A673 (cell line): ENCODE measurements at regions of chr7 and their contacts with region 1.

Region 1: GRCh38 chr7:73623798-73624668 is at the start of gene MLXIPL:
- DNase-seq: peak; percentile 88
- H3K4me3 ChIP-seq: peak within 1 kb of the TSS; percentile 77
- H3K27ac ChIP-seq: peak within 1 kb of the TSS; percentile 23
- H3K4me1 ChIP-seq: peaks cover 15% of the 10 kb centered on the region
- H3K27me3 ChIP-seq: no peaks in the 10 kb centered on the region
- CTCF ChIP-seq: no peak
- total RNA-seq, gene MLXIPL: 17.4 and 20.6 TPM in 2 replicates

Region 2: DNA sequence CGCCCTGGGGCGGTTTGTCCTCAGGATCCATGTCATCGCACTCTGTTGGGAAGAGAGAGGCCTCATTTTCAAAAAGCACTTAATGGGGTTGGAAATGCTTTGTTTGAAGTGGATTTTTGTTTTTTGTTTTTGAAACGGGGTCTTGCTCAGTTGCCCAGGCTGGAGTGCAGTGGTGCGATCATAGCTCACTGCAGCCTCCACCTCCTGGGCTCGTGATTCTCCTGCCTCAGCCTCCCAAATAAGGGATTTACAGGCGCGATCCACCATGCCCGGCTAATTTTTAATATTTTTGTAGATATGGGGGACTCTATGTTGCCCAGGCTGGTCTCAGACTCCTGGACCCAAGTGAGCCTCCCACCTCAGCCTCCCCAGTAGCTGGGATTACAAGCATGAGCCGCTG is 295.3 kb before region 1 on chr7:
- CTCF ChIA-PET with region 1: interaction called, 10 read pairs
- POLR2A ChIA-PET with region 1: no interaction called
- intact Hi-C with region 1: no loop called
- DNase-seq: no peak
- H3K4me3 ChIP-seq: no peak overlapping the region
- H3K27ac ChIP-seq: no peak overlapping the region
- H3K4me1 ChIP-seq: no peaks in the 10 kb centered on the region
- H3K27me3 ChIP-seq: no peaks in the 10 kb centered on the region
- CTCF ChIP-seq: no peak

Region 3: GRCh38 chr7:73433924-73434700 is 189.9 kb before region 1 on chr7:
- CTCF ChIA-PET with region 1: no interaction called
- POLR2A ChIA-PET with region 1: no interaction called
- intact Hi-C with region 1: no loop called
- DNase-seq: no peak
- H3K4me3 ChIP-seq: peak overlapping the region; percentile 43
- H3K27ac ChIP-seq: no peak overlapping the region
- H3K4me1 ChIP-seq: peaks cover 8% of the 10 kb centered on the region
- H3K27me3 ChIP-seq: no peaks in the 10 kb centered on the region
- CTCF ChIP-seq: no peak

Region 4: GRCh38 chr7:73578342-73579127 is 45.5 kb before region 1 on chr7 and contains the start of gene TBL2:
- CTCF ChIA-PET with region 1: no interaction called
- POLR2A ChIA-PET with region 1: interaction called, 11 read pairs
- intact Hi-C with region 1: no loop called
- DNase-seq: peak; percentile 100
- H3K4me3 ChIP-seq: peak within 1 kb of the TSS; percentile 71
- H3K27ac ChIP-seq: peak within 1 kb of the TSS; percentile 87
- H3K4me1 ChIP-seq: peaks cover 16% of the 10 kb centered on the region
- H3K27me3 ChIP-seq: no peaks in the 10 kb centered on the region
- CTCF ChIP-seq: peak; percentile 30; the same call in 1 of the 2 replicates
- total RNA-seq, gene TBL2: 48.9 and 51.9 TPM in 2 replicates

Region 5: GRCh38 chr7:73667344-73668102 is 43.5 kb after region 1 on chr7 and contains the start of gene VPS37D:
- CTCF ChIA-PET with region 1: no interaction called
- POLR2A ChIA-PET with region 1: no interaction called
- intact Hi-C with region 1: loop called (anchors 5 kb)
- DNase-seq: peak; percentile 94
- H3K4me3 ChIP-seq: peak within 1 kb of the TSS; percentile 87
- H3K27ac ChIP-seq: peak within 1 kb of the TSS; percentile 68
- H3K4me1 ChIP-seq: peaks cover 6% of the 10 kb centered on the region
- H3K27me3 ChIP-seq: no peaks in the 10 kb centered on the region
- CTCF ChIP-seq: peak; percentile 64
- total RNA-seq, gene VPS37D: 8.7 and 10.1 TPM in 2 replicates

Region 6: GRCh38 chr7:74275401-74275881 is 651.4 kb after region 1 on chr7:
- CTCF ChIA-PET with region 1: no interaction called
- POLR2A ChIA-PET with region 1: no interaction called
- intact Hi-C with region 1: no loop called
- DNase-seq: no peak
- H3K4me3 ChIP-seq: no peak overlapping the region
- H3K27ac ChIP-seq: no peak overlapping the region
- H3K4me1 ChIP-seq: peaks cover 20% of the 10 kb centered on the region
- H3K27me3 ChIP-seq: no peaks in the 10 kb centered on the region
- CTCF ChIP-seq: peak; percentile 62